ENCODE measurements at regions of chr1 and their contacts with region 1.

Region 1: GRCh38 chr1:201565024-201565730 is 26.2 kb downstream of the NAV1 start:
- DNase-seq: no peak
- H3K4me3 ChIP-seq: no peak overlapping the region
- H3K27ac ChIP-seq: no peak overlapping the region
- H3K4me1 ChIP-seq: peaks cover 37% of the 10 kb centered on the region
- H3K27me3 ChIP-seq: no peaks in the 10 kb centered on the region
- CTCF ChIP-seq: no peak
- POLR2A ChIP-seq: no peak

Region 2: DNA sequence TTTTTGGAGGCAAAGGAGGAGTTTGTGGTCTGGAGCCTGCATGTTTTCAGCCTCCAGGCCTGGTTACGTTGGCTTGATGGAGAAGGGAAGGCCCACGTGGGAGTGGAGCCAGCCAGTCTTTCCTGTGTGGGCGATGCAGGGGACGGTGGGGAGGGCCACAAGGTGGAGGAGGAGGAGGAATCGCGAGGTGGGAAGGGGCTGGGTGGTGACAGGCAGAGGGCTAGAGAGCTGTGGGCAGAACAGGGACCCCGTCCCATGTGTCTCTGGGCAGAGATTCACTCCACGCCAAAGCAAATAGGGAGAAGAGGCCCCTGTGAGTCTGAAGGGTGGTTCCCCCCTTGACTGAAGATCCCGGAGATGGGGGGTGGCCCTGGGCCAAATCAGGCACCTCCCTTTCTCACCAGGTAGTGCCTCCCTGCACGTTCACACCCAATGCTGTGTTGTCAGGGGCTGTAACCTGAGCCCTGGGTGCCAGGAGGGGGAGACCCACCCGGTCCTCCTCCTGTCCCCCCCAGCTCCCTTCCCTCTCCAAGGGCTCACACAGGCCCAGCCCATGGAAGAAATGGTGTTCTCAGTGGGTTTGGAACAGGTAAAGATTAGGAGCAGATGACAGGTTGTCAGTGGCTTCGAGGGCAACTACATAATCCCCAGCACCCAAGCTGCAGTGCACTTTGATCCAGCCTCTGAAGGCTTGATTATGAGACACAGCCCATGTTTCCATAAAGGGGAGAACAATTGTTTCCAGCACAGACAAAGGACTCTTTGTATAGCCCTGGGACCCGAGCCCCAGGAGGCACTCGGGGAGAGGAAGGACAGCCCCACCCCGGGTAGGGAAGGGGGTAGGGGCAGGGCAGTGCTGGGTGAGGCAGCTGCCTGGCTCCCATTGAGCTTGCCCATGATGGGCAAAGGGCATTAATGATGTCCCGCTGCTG is 519.8 kb after region 1 on chr1:
- intact Hi-C with region 1: loop called (anchors 5 kb)
- DNase-seq: no peak
- H3K4me3 ChIP-seq: no peak overlapping the region
- H3K27ac ChIP-seq: no peak overlapping the region
- H3K4me1 ChIP-seq: peaks cover 25% of the 10 kb centered on the region
- H3K27me3 ChIP-seq: no peaks in the 10 kb centered on the region
- CTCF ChIP-seq: no peak
- POLR2A ChIP-seq: no peak

Measured in vagina (tissue), 2 donors.